ENCODE measurements at regions of chr9 and their contacts with region 1.

Region 1: DNA sequence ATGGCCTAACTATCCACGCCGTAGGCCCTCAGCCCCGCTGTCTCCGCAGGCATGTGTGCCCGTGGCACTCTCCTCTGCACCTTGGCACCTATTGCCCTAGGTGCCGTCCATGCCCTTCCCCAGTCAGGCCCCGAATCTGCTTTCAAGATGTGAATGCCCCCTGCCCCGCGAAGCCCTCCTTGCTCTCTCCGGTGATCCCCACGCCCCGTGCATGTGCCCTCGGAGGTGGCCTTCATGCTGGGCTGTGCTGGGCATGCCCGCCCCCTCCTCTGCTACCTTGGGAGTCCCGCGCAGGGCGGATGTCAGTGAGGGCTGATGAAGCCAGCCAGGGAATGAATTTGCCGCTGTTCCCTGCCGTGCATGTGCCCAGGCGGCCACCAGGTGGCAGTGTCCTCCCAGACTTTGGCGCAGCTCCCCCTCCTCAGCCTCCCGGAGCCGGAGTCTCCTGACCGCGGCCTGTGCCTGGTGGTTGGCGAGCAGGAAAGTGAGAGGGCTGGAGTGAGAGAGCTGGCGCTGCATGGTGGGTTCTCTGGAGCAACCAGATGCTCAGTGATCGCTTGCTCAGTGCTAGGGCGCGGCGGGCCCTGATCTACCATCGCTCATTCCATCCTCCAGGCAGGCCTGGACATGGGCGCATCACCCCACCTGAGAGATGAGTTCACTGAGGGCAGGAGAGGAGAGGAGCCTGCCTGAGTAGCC is 112.9 kb upstream of the LMX1B start:
- DNase-seq: peak; percentile 95
- H3K4me3 ChIP-seq: peak overlapping the region in 1 of 2 experiments; percentile 54; a peak in 1 of 4 replicates
- H3K27ac ChIP-seq: no peak overlapping the region; a peak in 1 of 4 replicates
- H3K4me1 ChIP-seq: peaks cover 0 to 26% of the 10 kb centered on the region in 2 experiments; a peak in 1 of 4 replicates
- H3K27me3 ChIP-seq: no peaks in the 10 kb centered on the region
- CTCF ChIP-seq: peak; percentile 86
- EP300 ChIP-seq: no peak
- RAD21 ChIP-seq: peak; percentile 99

Region 2: DNA sequence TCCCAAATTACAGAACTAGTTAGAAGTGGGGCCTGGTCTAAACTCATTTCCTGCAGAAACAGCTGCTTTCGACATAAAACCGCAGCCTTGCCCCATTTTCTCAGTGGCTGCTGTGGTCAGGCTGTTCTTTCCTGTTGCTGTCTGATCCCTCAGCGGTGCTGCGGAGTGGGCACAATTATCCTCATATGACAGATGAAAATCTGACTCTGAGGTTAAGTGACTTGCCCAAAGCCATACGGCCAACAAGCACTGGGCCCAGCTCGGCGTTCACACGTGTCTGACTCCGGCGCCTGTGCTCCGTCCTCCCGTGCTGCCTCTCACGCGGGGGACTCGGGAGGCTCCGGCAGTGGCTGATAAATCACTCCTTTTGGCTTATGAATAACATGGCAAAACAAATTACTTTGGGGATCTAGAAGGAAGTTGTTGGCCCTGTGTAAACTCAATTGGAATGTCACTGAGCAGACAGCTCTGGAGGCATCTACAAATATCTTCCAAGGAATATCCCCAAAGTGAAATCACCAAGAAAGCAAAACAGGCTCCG is 29.7 kb before region 1 on chr9:
- CTCF ChIA-PET with region 1: interaction called, 14 read pairs
- POLR2A ChIA-PET with region 1: no interaction called
- DNase-seq: no peak
- H3K4me3 ChIP-seq: no peak overlapping the region
- H3K27ac ChIP-seq: no peak overlapping the region
- H3K4me1 ChIP-seq: peaks cover 0 to 11% of the 10 kb centered on the region in 2 experiments; a peak in 3 of 4 replicates
- H3K27me3 ChIP-seq: no peaks in the 10 kb centered on the region
- CTCF ChIP-seq: no peak
- EP300 ChIP-seq: no peak
- RAD21 ChIP-seq: no peak

Region 3: DNA sequence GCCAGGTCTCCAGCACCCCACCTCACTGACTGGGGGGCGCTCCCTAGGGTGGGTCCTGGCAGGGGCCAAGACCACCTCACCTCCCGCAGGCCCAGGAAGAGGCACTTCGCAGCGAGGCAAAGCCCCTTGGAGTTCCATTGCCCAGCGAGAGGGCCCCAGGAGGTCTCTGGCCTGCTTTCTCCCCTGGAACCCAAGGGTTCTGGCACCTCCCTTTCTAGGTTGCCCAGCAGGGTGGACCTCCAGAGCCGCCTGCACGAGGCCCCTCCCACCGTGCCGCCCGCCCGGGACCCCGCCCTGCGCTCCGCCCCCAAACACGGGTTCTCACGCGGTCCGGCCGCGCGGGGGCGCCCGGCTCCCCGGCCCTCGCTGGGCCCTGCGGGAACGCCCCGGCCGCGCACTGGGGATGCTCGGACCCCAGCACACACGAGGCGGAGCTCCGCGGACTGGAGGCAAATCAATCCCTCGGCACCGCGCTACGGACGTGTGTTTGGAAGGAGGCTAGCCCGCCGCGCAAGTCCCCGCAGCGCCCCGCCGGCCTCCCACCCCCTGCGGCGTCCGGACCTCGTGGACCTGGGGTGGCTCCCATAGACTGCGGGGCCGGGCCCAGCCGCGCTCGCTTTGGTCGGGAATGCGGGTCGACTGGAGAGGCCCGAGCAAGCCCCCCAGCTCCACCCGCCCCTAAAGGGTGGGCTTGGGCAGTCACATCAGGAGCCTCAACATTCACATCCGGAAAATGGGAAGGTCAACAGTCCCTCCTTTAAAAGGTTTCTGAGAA is 13.4 kb after region 1 on chr9:
- CTCF ChIA-PET with region 1: interaction called, 121 read pairs
- POLR2A ChIA-PET with region 1: interaction called, 4 read pairs
- DNase-seq: peak; percentile 92
- H3K4me3 ChIP-seq: no peak overlapping the region
- H3K27ac ChIP-seq: peak overlapping the region in 1 of 2 experiments; percentile 54; a peak in 1 of 4 replicates
- H3K4me1 ChIP-seq: peaks cover 0 to 54% of the 10 kb centered on the region in 2 experiments; a peak in 2 of 4 replicates
- H3K27me3 ChIP-seq: no peaks in the 10 kb centered on the region
- CTCF ChIP-seq: peak; percentile 40
- EP300 ChIP-seq: no peak
- RAD21 ChIP-seq: peak; percentile 46

Region 4: GRCh38 chr9:126532019-126532462 is 31.2 kb after region 1 on chr9:
- CTCF ChIA-PET with region 1: interaction called, 42 read pairs
- POLR2A ChIA-PET with region 1: no interaction called
- DNase-seq: peak; percentile 79
- H3K4me3 ChIP-seq: no peak overlapping the region
- H3K27ac ChIP-seq: peak overlapping the region in 1 of 2 experiments; percentile 96; a peak in 2 of 4 replicates
- H3K4me1 ChIP-seq: peaks cover 0 to 77% of the 10 kb centered on the region in 2 experiments; a peak in 2 of 4 replicates
- H3K27me3 ChIP-seq: peaks cover 25% of the 10 kb centered on the region; the same call in 1 of the 2 replicates
- CTCF ChIP-seq: no peak
- EP300 ChIP-seq: peak in 1 of 2 experiments; percentile 69; a peak in 1 of 4 replicates
- RAD21 ChIP-seq: no peak

Region 5: DNA sequence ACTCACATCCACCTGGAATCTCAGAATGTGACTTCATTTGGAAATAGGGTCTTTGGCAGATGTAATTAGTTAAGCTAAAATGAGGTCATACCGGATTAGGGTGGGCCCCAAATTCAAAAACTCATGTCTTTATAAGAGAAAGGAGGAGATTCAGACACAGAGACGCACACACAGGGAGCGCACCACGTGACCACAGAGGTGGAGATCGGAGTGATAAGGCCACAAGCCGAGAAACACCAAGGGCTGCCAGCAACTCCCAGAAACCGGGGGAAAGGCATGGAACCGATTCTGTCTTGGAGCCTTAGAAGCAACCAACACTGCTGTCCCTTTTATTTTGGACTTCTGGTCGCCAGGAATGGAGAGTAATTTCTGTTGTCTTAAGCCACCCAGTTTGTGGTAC is 81.1 kb after region 1 on chr9:
- CTCF ChIA-PET with region 1: interaction called, 16 read pairs
- POLR2A ChIA-PET with region 1: no interaction called
- DNase-seq: peak; percentile 56
- H3K4me3 ChIP-seq: no peak overlapping the region
- H3K27ac ChIP-seq: no peak overlapping the region
- H3K4me1 ChIP-seq: peaks cover 0 to 2% of the 10 kb centered on the region in 2 experiments; a peak in 1 of 4 replicates
- H3K27me3 ChIP-seq: peaks cover 38% of the 10 kb centered on the region; the same call in 1 of the 2 replicates
- CTCF ChIP-seq: no peak
- EP300 ChIP-seq: no peak
- RAD21 ChIP-seq: no peak

Region 6: DNA sequence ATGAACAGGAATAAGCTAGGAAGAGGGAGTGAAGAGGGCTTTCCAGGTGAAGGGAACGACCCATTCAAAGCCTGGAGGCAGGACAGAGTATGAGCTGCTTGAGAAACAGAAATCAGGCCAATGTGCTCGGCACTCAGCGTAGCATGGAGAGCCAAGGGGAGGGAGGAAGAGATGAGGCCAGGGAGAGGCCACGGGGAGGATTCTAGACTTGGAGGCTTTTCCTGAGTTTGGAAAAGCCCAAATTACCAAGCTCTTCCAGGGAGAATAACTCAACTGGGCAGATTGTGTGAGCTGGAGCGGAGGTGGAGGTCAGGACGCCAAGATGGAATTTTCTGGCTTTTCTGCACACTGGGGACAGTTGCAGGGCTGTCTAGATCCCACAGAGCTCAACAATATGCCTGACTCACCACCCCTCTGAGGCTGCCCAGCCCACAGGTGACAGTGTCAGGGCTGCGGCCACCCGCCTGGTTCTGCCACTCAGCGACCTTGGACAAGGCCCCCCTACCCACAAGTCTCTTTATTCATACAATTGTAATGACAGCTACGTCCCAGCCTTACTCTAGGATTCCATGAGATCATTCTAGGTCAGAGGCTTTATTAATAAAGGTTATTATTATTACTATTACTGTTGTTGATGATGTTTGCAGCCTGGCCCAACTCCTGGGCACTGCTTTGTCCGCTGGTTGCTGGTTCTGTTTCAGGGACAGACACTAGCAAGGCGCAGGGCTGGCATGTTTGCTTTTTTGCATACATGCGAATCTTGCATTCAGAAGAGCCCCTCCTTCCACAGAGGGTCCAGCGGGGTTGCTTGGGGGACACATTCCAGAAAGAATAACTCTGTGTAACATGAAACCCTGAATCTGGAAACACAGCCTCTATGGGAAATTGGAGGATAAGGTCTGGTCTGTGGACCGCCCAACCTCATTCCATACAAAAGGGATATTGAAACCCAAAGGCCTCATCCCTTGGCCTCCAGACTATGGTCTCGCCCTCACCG is 103.5 kb after region 1 on chr9:
- CTCF ChIA-PET with region 1: interaction called, 48 read pairs
- POLR2A ChIA-PET with region 1: no interaction called
- DNase-seq: no peak
- H3K4me3 ChIP-seq: no peak overlapping the region
- H3K27ac ChIP-seq: no peak overlapping the region
- H3K4me1 ChIP-seq: no peaks in the 10 kb centered on the region
- H3K27me3 ChIP-seq: peaks cover 41% of the 10 kb centered on the region
- CTCF ChIP-seq: no peak
- EP300 ChIP-seq: no peak
- RAD21 ChIP-seq: no peak

Region 7: GRCh38 chr9:126690431-126691350 is 189.9 kb after region 1 on chr9:
- CTCF ChIA-PET with region 1: interaction called, 52 read pairs
- POLR2A ChIA-PET with region 1: no interaction called
- DNase-seq: peak; percentile 82
- H3K4me3 ChIP-seq: no peak overlapping the region; a peak in 1 of 4 replicates
- H3K27ac ChIP-seq: no peak overlapping the region
- H3K4me1 ChIP-seq: no peaks in the 10 kb centered on the region
- H3K27me3 ChIP-seq: peaks cover 44% of the 10 kb centered on the region
- CTCF ChIP-seq: peak; percentile 66
- EP300 ChIP-seq: no peak
- RAD21 ChIP-seq: peak; percentile 50